ENCODE measurements at regions of chr20 and their contacts with region 1.

Region 1: DNA sequence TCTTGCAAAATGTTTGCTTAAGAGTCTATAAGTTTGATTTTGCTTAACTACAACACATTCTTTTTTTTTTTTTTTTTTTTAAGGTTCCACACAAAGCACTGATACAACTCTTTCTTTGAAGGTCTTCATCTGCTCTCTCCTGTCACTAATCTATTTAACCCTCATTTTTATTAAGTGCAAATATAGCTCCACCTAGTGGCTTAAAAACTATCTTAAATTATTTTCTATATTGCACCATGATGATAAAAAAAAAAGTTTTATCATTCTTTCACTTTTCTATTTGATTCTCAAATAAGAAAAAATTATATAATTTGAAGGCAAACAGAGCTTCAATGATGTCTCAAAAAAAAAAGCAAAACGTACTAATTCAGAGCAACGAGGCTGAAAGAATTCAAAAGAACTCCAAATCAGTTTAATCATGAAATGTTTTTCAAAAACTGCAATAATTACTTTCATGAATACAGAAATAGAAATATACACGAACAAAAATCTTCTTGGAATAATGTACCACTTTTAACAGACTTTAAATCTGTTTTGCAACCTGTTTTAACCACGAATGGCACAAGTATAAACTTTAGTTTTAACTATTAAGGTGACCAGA is 12.8 kb downstream of the ESF1 start:
- DNase-seq: peak; percentile 37
- ATAC-seq: no peak
- H3K4me3 ChIP-seq: no peak overlapping the region
- H3K4me3 Mint-ChIP-seq: no peak overlapping the region
- H3K27ac ChIP-seq: no peak overlapping the region
- H3K27ac Mint-ChIP-seq: no peak overlapping the region
- H3K4me1 ChIP-seq: no peaks in the 10 kb centered on the region
- H3K4me1 Mint-ChIP-seq: peaks cover 7% of the 10 kb centered on the region
- H3K27me3 ChIP-seq: no peaks in the 10 kb centered on the region
- H3K27me3 Mint-ChIP-seq: no peaks in the 10 kb centered on the region
- CTCF ChIP-seq: peak; percentile 89

Region 2: DNA sequence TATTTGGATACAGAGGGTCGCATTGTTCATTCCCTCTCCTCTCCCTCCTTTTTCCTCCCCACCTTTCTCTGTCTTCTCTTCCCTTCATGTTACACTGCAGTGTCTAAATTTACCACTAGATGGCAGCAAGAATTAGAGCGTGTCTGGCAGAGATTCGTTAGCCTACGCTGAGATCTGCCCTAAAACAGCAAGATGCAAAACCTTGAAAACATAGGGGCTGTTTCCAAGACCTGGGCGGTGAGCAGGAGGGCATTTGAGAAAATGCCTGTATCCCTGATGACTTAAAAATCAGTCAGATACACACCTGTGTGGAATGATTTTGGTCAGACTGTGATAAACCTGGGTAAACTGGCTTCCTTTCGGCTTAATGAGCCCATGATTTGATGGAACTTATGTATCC is 652.4 kb before region 1 on chr20:
- CTCF ChIA-PET with region 1: interaction called, 70 read pairs
- POLR2A ChIA-PET with region 1: no interaction called
- intact Hi-C with region 1: no loop called
- DNase-seq: peak; percentile 57
- ATAC-seq: peak; percentile 53
- H3K4me3 ChIP-seq: no peak overlapping the region
- H3K4me3 Mint-ChIP-seq: no peak overlapping the region
- H3K27ac ChIP-seq: no peak overlapping the region
- H3K27ac Mint-ChIP-seq: no peak overlapping the region
- H3K4me1 ChIP-seq: no peaks in the 10 kb centered on the region
- H3K4me1 Mint-ChIP-seq: no peaks in the 10 kb centered on the region
- H3K27me3 ChIP-seq: no peaks in the 10 kb centered on the region
- H3K27me3 Mint-ChIP-seq: peaks cover 9% of the 10 kb centered on the region
- CTCF ChIP-seq: peak; percentile 92

Region 3: GRCh38 chr20:13458860-13459451 is 313.0 kb before region 1 on chr20:
- CTCF ChIA-PET with region 1: interaction called, 11 read pairs
- POLR2A ChIA-PET with region 1: no interaction called
- intact Hi-C with region 1: loop called (anchors 1 kb)
- DNase-seq: peak; percentile 30
- ATAC-seq: peak; percentile 39
- H3K4me3 ChIP-seq: no peak overlapping the region
- H3K4me3 Mint-ChIP-seq: no peak overlapping the region
- H3K27ac ChIP-seq: no peak overlapping the region
- H3K27ac Mint-ChIP-seq: no peak overlapping the region
- H3K4me1 ChIP-seq: no peaks in the 10 kb centered on the region
- H3K4me1 Mint-ChIP-seq: no peaks in the 10 kb centered on the region
- H3K27me3 ChIP-seq: no peaks in the 10 kb centered on the region
- H3K27me3 Mint-ChIP-seq: no peaks in the 10 kb centered on the region
- CTCF ChIP-seq: peak; percentile 81

Region 4: GRCh38 chr20:13610184-13610583 is 161.8 kb before region 1 on chr20:
- CTCF ChIA-PET with region 1: interaction called, 29 read pairs
- POLR2A ChIA-PET with region 1: no interaction called
- intact Hi-C with region 1: loop called (anchors 1 kb)
- DNase-seq: peak; percentile 31
- ATAC-seq: peak; percentile 41
- H3K4me3 ChIP-seq: no peak overlapping the region
- H3K4me3 Mint-ChIP-seq: no peak overlapping the region
- H3K27ac ChIP-seq: no peak overlapping the region
- H3K27ac Mint-ChIP-seq: no peak overlapping the region
- H3K4me1 ChIP-seq: no peaks in the 10 kb centered on the region
- H3K4me1 Mint-ChIP-seq: peaks cover 3% of the 10 kb centered on the region
- H3K27me3 ChIP-seq: no peaks in the 10 kb centered on the region
- H3K27me3 Mint-ChIP-seq: no peaks in the 10 kb centered on the region
- CTCF ChIP-seq: peak; percentile 33

Region 5: DNA sequence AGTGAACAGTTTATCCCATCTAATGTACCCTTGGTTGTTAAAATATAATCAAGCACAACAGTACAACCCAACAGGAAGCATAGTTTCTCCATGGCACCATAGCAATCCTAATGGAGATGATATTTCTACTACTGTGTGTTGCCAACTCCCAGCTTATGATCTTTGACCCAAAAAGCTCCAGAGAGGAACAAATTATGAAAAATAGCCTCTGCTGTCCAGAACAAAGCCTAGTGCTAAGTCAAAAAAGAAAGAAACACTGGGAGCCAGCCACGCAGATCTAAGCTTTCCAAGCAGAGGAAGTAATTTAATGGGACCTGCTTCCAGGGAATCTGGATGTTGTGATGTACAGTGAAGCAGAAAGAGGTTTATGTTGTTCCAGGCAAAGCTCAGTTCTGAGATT is 81.0 kb before region 1 on chr20:
- CTCF ChIA-PET with region 1: no interaction called
- POLR2A ChIA-PET with region 1: no interaction called
- intact Hi-C with region 1: no loop called
- DNase-seq: no peak
- ATAC-seq: no peak
- H3K4me3 ChIP-seq: no peak overlapping the region
- H3K4me3 Mint-ChIP-seq: no peak overlapping the region
- H3K27ac ChIP-seq: no peak overlapping the region
- H3K27ac Mint-ChIP-seq: no peak overlapping the region
- H3K4me1 ChIP-seq: peaks cover 0 to 5% of the 10 kb centered on the region in 2 donors
- H3K4me1 Mint-ChIP-seq: peaks cover 3% of the 10 kb centered on the region
- H3K27me3 ChIP-seq: no peaks in the 10 kb centered on the region
- H3K27me3 Mint-ChIP-seq: peaks cover 5% of the 10 kb centered on the region
- CTCF ChIP-seq: no peak

Region 6: GRCh38 chr20:13784893-13785715 is 13.2 kb after region 1 on chr20 and contains the starts of genes ESF1 and NDUFAF5:
- CTCF ChIA-PET with region 1: interaction called, 33 read pairs
- POLR2A ChIA-PET with region 1: interaction called, 3 read pairs
- intact Hi-C with region 1: no loop called
- DNase-seq: peak; percentile 95
- ATAC-seq: peak; percentile 98
- H3K4me3 ChIP-seq: peak within 1 kb of the TSS; percentile 68 to 91 (median 85)
- H3K4me3 Mint-ChIP-seq: peak within 1 kb of the TSS; percentile 98
- H3K27ac ChIP-seq: peak within 1 kb of the TSS; percentile 85 to 91
- H3K27ac Mint-ChIP-seq: peak within 1 kb of the TSS; percentile 96
- H3K4me1 ChIP-seq: peaks cover 19 to 23% of the 10 kb centered on the region in 2 donors
- H3K4me1 Mint-ChIP-seq: peaks cover 49% of the 10 kb centered on the region
- H3K27me3 ChIP-seq: no peaks in the 10 kb centered on the region
- H3K27me3 Mint-ChIP-seq: no peaks in the 10 kb centered on the region
- CTCF ChIP-seq: no peak
- total RNA-seq, gene ESF1: 13.8 and 13.9 TPM in 2 replicates
- total RNA-seq, gene NDUFAF5: 28.8 and 32.3 TPM in 2 replicates

Region 7: DNA sequence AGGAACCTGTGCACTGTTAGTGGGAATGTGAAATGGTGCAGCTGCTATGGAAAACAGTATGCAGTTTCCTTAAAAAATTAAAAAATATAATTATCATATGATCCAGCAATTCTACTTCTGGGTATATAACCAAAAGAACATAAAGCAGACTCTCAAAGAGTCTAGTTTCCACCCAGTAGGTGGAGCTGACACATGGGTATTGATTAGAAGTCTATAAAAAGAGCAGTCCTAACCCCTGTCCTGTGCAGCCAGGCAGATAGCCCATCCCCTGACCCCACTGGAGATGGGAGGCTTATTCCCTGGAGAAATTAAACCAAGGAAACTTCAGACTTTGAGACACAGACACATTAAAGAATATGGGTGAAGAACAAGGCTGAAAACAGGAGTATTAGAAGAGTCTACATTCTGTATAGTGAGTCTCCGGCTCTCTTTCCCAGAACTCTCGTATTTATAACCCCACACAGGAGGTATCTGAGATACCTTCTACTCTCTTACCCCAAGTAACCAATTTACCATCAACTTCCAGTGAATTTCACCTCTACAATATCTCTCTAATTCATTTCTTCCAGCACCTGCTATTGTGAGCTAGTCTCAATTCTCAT is 126.2 kb after region 1 on chr20:
- CTCF ChIA-PET with region 1: no interaction called
- POLR2A ChIA-PET with region 1: no interaction called
- intact Hi-C with region 1: no loop called
- DNase-seq: no peak
- ATAC-seq: no peak
- H3K4me3 ChIP-seq: no peak overlapping the region
- H3K4me3 Mint-ChIP-seq: no peak overlapping the region
- H3K27ac ChIP-seq: no peak overlapping the region
- H3K27ac Mint-ChIP-seq: no peak overlapping the region
- H3K4me1 ChIP-seq: no peaks in the 10 kb centered on the region
- H3K4me1 Mint-ChIP-seq: no peaks in the 10 kb centered on the region
- H3K27me3 ChIP-seq: no peaks in the 10 kb centered on the region
- H3K27me3 Mint-ChIP-seq: no peaks in the 10 kb centered on the region
- CTCF ChIP-seq: no peak

Measured in B cell (primary cell).